MCF 10A (cell line): ENCODE measurements at regions of chr9 and their contacts with region 1.

Region 1: DNA sequence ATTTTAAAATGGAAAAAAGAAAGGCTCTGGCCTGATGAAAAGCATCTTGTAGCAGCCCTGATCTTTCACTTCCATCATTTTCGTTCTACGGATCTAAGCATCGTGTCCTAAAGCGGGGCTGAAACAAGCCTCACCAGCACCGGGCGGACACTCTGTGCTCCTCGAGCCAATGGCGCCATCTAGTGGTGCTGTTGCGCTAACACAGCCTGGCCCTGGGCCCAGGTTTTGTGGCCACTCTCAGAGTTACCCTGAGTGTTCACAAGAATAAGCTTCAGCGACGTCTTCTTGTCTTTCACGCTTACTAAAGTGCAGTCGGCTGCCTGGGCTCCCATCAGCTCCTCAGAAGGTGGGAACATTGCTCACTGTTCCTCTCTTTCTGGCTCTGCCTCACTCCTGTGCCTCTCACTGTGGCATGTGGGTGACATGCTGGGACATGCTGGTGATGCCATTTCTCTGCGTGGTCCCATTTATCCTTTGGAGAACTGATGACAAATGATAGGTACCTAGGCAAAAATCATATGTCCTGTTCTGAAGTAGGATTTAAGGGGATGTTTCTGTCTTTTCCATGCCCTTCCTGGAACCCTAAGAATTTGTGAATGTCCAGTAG is 32.7 kb downstream of the DMRT3 start:
- DNase-seq: peak; percentile 87
- H3K4me3 Mint-ChIP-seq: no peak overlapping the region
- H3K27ac Mint-ChIP-seq: peak overlapping the region; percentile 67
- H3K4me1 Mint-ChIP-seq: peaks cover 14% of the 10 kb centered on the region
- H3K27me3 Mint-ChIP-seq: no peaks in the 10 kb centered on the region
- CTCF ChIP-seq: peak; percentile 97

Region 2: GRCh38 chr9:347667-348292 is 661.4 kb before region 1 on chr9:
- CTCF ChIA-PET with region 1: interaction called, 13 read pairs
- POLR2A ChIA-PET with region 1: no interaction called
- intact Hi-C with region 1: loop called (anchors 5 kb)
- DNase-seq: peak; percentile 57
- H3K4me3 Mint-ChIP-seq: no peak overlapping the region
- H3K27ac Mint-ChIP-seq: no peak overlapping the region
- H3K4me1 Mint-ChIP-seq: no peaks in the 10 kb centered on the region
- H3K27me3 Mint-ChIP-seq: peaks cover 13% of the 10 kb centered on the region
- CTCF ChIP-seq: peak; percentile 78

Region 3: GRCh38 chr9:613771-614347 is 395.3 kb before region 1 on chr9:
- CTCF ChIA-PET with region 1: interaction called, 8 read pairs
- POLR2A ChIA-PET with region 1: no interaction called
- intact Hi-C with region 1: loop called (anchors 5 kb)
- DNase-seq: peak; percentile 75
- H3K4me3 Mint-ChIP-seq: peak overlapping the region; percentile 5
- H3K27ac Mint-ChIP-seq: no peak overlapping the region
- H3K4me1 Mint-ChIP-seq: peaks cover 28% of the 10 kb centered on the region
- H3K27me3 Mint-ChIP-seq: no peaks in the 10 kb centered on the region
- CTCF ChIP-seq: peak; percentile 68

Region 4: GRCh38 chr9:893843-894420 is 115.3 kb before region 1 on chr9:
- CTCF ChIA-PET with region 1: interaction called, 183 read pairs
- POLR2A ChIA-PET with region 1: interaction called, 3 read pairs
- intact Hi-C with region 1: loop called (anchors 1 kb)
- DNase-seq: peak; percentile 77
- H3K4me3 Mint-ChIP-seq: no peak overlapping the region
- H3K27ac Mint-ChIP-seq: no peak overlapping the region
- H3K4me1 Mint-ChIP-seq: peaks cover 16% of the 10 kb centered on the region
- H3K27me3 Mint-ChIP-seq: no peaks in the 10 kb centered on the region
- CTCF ChIP-seq: peak; percentile 83

Region 5: DNA sequence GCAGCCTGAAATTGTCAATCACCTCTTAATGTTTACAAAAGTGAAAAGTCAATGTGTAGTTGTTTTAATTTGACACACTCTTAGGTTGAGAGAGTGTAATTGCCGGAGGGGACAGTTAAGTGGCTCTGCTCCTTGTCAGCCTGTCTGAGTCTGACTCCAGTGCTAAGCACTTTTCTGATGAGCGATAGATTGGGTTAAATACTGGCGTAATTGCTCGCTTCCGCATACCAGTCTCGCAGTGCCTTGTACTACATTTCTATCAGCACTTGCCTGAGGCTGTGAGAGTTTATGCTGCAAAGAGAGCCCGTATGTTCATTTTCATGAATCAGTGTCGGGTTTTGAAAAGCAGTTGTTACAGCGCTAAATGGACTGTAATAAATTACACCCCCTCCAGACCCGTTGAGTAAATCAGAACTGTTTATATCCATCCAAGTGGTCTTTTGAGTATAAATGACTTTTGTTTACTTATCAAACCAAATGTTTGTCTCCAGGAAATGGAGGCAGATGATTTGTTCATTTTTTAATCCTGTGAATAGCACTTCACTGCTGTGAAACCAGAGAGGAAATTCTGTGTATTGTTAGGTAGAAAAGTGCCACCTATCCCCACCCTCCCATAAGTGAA is 73.7 kb before region 1 on chr9:
- CTCF ChIA-PET with region 1: no interaction called
- POLR2A ChIA-PET with region 1: no interaction called
- intact Hi-C with region 1: no loop called
- DNase-seq: peak; percentile 57
- H3K4me3 Mint-ChIP-seq: peak overlapping the region; percentile 41
- H3K27ac Mint-ChIP-seq: no peak overlapping the region
- H3K4me1 Mint-ChIP-seq: no peaks in the 10 kb centered on the region
- H3K27me3 Mint-ChIP-seq: peaks cover 55% of the 10 kb centered on the region
- CTCF ChIP-seq: no peak

Region 6: DNA sequence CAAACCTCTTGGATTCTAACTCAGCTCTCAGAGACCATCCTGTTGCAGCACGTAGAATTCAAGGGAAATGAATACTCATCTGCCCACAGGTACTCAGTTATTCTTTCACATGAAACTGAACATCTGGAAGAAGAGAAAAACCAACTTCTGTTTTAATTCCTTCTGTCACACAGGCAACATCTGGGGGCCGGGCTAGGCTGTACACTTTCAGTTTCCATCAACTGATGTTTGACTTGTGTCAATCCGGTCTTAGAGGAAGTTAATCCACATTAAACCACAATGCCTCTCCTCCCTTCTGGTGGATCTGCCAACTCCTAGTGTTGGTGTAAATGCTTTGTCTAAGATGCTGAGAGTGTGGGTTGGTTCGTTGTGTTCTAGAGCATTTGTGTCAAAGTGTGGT is 15.2 kb before region 1 on chr9:
- CTCF ChIA-PET with region 1: interaction called, 12 read pairs
- POLR2A ChIA-PET with region 1: no interaction called
- intact Hi-C with region 1: no loop called
- DNase-seq: no peak
- H3K4me3 Mint-ChIP-seq: no peak overlapping the region
- H3K27ac Mint-ChIP-seq: no peak overlapping the region
- H3K4me1 Mint-ChIP-seq: no peaks in the 10 kb centered on the region
- H3K27me3 Mint-ChIP-seq: peaks cover 8% of the 10 kb centered on the region
- CTCF ChIP-seq: no peak

Region 7: GRCh38 chr9:1337161-1337560 is 328.0 kb after region 1 on chr9:
- CTCF ChIA-PET with region 1: no interaction called
- POLR2A ChIA-PET with region 1: no interaction called
- intact Hi-C with region 1: loop called (anchors 5 kb)
- DNase-seq: peak; percentile 79
- H3K4me3 Mint-ChIP-seq: no peak overlapping the region
- H3K27ac Mint-ChIP-seq: no peak overlapping the region
- H3K4me1 Mint-ChIP-seq: no peaks in the 10 kb centered on the region
- H3K27me3 Mint-ChIP-seq: no peaks in the 10 kb centered on the region
- CTCF ChIP-seq: peak; percentile 7

Region 8: DNA sequence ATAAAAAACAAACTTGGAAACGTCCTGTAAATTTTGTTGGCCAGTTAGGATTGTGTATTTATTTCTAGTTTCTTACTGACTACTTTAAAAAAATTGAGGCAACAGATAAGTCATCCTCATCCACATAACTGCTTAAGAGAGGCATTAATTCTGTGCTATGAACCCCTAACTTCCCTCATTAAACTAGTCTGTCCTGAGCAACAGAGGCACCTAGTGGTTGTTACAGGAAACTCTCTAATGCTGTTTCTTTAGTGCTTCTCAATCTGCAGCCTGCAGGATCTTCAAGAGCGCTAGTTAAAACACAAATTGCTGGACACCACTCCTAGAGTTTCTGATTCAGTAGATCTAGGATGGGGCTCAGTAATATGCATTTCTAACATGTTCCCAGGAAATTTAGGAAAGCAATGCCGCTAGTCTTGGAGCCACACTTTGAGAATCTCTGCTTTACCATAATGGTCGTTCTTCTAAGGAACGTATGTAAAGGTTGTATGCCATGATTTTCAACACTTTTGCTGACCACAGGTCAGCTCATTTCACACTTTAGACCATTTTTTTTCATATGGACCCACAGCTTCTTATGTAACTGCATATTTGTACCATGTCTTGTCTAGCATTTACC is 595.8 kb after region 1 on chr9:
- CTCF ChIA-PET with region 1: interaction called, 11 read pairs
- POLR2A ChIA-PET with region 1: no interaction called
- intact Hi-C with region 1: loop called (anchors 5 kb)
- DNase-seq: peak; percentile 56
- H3K4me3 Mint-ChIP-seq: no peak overlapping the region
- H3K27ac Mint-ChIP-seq: no peak overlapping the region
- H3K4me1 Mint-ChIP-seq: no peaks in the 10 kb centered on the region
- H3K27me3 Mint-ChIP-seq: peaks cover 12% of the 10 kb centered on the region
- CTCF ChIP-seq: peak; percentile 76